CD8-positive, alpha-beta memory T cell (primary cell): ENCODE measurements at regions of chr10 and their contacts with region 1.

Region 1: DNA sequence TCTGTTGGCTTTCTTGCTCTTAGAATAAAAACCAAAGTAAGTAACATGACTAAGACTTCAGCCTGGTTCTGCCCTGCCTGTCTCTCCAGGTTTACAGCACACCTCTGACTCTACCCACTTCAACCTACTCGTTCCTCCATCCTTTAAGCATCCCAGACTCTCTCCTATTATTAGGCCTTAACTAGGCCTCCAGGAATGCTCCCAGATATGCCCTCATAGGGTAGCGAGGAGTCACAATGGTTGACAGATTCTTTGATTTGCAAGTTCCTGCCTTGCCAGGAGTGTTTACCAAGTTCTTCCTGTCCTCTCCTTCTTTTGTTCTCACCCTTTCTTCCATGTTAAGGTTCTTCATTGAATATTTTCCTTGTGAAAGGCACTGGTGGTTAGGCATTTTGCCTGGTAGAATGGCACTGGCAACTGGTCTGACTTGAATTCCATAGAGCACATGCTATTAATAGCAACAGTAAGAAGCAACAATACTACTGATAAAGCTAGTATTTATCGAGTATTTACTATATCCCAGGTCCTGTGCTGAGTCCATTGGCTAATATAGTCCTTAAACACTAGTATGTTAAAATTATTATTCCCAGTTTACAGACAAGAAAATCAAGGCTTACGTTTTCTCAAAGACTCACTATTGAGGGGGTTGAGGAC is 327.9 kb upstream of the PRKCQ start:
- DNase-seq: no peak
- H3K4me3 ChIP-seq: no peak overlapping the region
- H3K4me3 Mint-ChIP-seq: no peak overlapping the region
- H3K27ac ChIP-seq: no peak overlapping the region
- H3K27ac Mint-ChIP-seq: no peak overlapping the region
- H3K4me1 ChIP-seq: peaks cover 5% of the 10 kb centered on the region
- H3K4me1 Mint-ChIP-seq: no peaks in the 10 kb centered on the region
- H3K27me3 ChIP-seq: no peaks in the 10 kb centered on the region
- H3K27me3 Mint-ChIP-seq: peaks cover 3 to 10% of the 10 kb centered on the region in 2 donors

Region 2: DNA sequence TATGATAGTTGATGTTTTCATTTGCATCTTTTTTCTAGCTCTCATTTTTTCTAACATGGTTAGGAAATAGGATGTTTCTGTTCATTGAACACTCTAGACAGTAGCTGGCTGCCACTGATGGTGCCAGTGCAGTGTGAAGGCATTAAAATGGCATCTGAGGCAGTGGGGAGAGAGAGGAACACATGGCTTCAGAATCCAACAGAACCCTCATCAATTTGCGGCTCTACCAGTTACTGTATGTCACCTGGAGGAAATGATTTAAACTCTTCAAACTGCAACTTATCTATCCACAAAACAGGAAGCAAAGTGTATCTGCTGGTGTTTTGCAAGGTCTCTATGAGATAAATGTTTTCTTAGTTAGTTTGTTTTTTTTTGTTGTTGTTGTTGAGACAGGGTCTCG is 22.7 kb before region 1 on chr10:
- CTCF ChIA-PET with region 1: no interaction called
- POLR2A ChIA-PET with region 1: no interaction called
- DNase-seq: no peak
- H3K4me3 ChIP-seq: no peak overlapping the region
- H3K4me3 Mint-ChIP-seq: peak overlapping the region in 4 of 7 donors; percentile 2 to 46 (median 10)
- H3K27ac ChIP-seq: no peak overlapping the region
- H3K27ac Mint-ChIP-seq: peak overlapping the region in 1 of 8 donors; percentile 19
- H3K4me1 ChIP-seq: no peaks in the 10 kb centered on the region
- H3K4me1 Mint-ChIP-seq: peaks cover 5 to 10% (median 9%) of the 10 kb centered on the region in 3 donors
- H3K27me3 ChIP-seq: no peaks in the 10 kb centered on the region
- H3K27me3 Mint-ChIP-seq: peaks cover 3 to 6% of the 10 kb centered on the region in 2 donors

Region 3: DNA sequence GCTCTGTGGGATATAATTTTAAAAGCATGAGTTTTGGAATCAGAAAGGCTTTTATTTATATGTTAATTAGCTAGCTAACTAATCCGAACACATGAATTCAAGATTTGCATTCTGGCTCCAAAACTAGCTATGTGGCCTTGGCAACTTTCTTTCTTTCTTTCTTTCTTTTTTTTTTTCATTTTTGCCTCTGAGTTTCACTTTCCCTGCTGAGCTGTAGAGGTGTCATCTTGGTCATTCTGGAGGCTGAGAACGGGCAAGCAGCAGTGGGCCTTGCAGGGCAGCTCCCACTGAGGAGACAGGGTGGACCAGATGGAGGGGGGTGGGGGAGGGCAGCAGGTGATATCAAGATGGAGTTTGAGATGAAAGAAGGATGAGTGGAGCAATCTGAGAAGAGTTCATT is 527.7 kb after region 1 on chr10:
- CTCF ChIA-PET with region 1: no interaction called
- POLR2A ChIA-PET with region 1: interaction called, 14 read pairs
- DNase-seq: no peak
- H3K4me3 ChIP-seq: no peak overlapping the region
- H3K4me3 Mint-ChIP-seq: no peak overlapping the region
- H3K27ac ChIP-seq: no peak overlapping the region
- H3K27ac Mint-ChIP-seq: no peak overlapping the region
- H3K4me1 ChIP-seq: no peaks in the 10 kb centered on the region
- H3K4me1 Mint-ChIP-seq: peaks cover 7 to 12% (median 11%) of the 10 kb centered on the region in 3 donors
- H3K27me3 ChIP-seq: no peaks in the 10 kb centered on the region
- H3K27me3 Mint-ChIP-seq: peaks cover 3 to 5% of the 10 kb centered on the region in 2 donors